Motor neuron (in vitro differentiated cells): ENCODE measurements at regions of chrX and their contacts with region 1.

Region 1: GRCh38 chrX:47523297-47523696 is 37.7 kb upstream of the ARAF start:
- ATAC-seq: peak; percentile 99 to 100 (median 100)
- H3K4me3 ChIP-seq: peak overlapping the region; percentile 30 to 69 (median 44)
- H3K27ac ChIP-seq: peak overlapping the region in 1 of 2 donors; percentile 68
- H3K4me1 ChIP-seq: peaks cover 0 to 2% of the 10 kb centered on the region in 2 donors

Region 2: GRCh38 chrX:47193475-47194193 is 329.7 kb before region 1 on chrX and contains the start of gene UBA1:
- in situ Hi-C with region 1: loop called in 2 of 9 experiments (anchors 25 kb)
- ATAC-seq: peak; percentile 38 to 83 (median 77)
- H3K4me3 ChIP-seq: peak within 1 kb of the TSS; percentile 75 to 95 (median 80)
- H3K27ac ChIP-seq: peak within 1 kb of the TSS; percentile 94 to 98
- H3K4me1 ChIP-seq: peaks cover 25 to 26% of the 10 kb centered on the region in 2 donors
- total RNA-seq, gene UBA1: 134 to 421 (median 190) TPM

Region 3: GRCh38 chrX:47217642-47218279 is 305.5 kb before region 1 on chrX:
- in situ Hi-C with region 1: loop called in 4 of 9 experiments (anchors 25 kb)
- ATAC-seq: peak; percentile 61 to 89 (median 86)
- H3K4me3 ChIP-seq: peak overlapping the region; percentile 71 to 97 (median 80)
- H3K27ac ChIP-seq: peak overlapping the region; percentile 99 to 100
- H3K4me1 ChIP-seq: peaks cover 16 to 19% of the 10 kb centered on the region in 2 donors